ENCODE measurements at regions of chr4 and their contacts with region 1.

Region 1: GRCh38 chr4:167021545-167022155 is 212.6 kb downstream of the SPOCK3 start:
- DNase-seq: peak; percentile 61
- H3K4me3 ChIP-seq: no peak overlapping the region
- H3K27ac ChIP-seq: no peak overlapping the region
- H3K4me1 ChIP-seq: no peaks in the 10 kb centered on the region
- H3K27me3 ChIP-seq: no peaks in the 10 kb centered on the region
- CTCF ChIP-seq: peak; percentile 86

Region 2: GRCh38 chr4:166165829-166166420 is 855.7 kb before region 1 on chr4:
- CTCF ChIA-PET with region 1: no interaction called
- POLR2A ChIA-PET with region 1: no interaction called
- intact Hi-C with region 1: loop called (anchors 10 kb)
- DNase-seq: peak; percentile 87
- H3K4me3 ChIP-seq: no peak overlapping the region
- H3K27ac ChIP-seq: no peak overlapping the region
- H3K4me1 ChIP-seq: no peaks in the 10 kb centered on the region
- H3K27me3 ChIP-seq: no peaks in the 10 kb centered on the region
- CTCF ChIP-seq: peak; percentile 74

Region 3: GRCh38 chr4:167041524-167041923 is 19.9 kb after region 1 on chr4:
- CTCF ChIA-PET with region 1: no interaction called
- POLR2A ChIA-PET with region 1: no interaction called
- intact Hi-C with region 1: no loop called
- DNase-seq: no peak
- H3K4me3 ChIP-seq: no peak overlapping the region
- H3K27ac ChIP-seq: no peak overlapping the region
- H3K4me1 ChIP-seq: no peaks in the 10 kb centered on the region
- H3K27me3 ChIP-seq: no peaks in the 10 kb centered on the region
- CTCF ChIP-seq: no peak

Region 4: DNA sequence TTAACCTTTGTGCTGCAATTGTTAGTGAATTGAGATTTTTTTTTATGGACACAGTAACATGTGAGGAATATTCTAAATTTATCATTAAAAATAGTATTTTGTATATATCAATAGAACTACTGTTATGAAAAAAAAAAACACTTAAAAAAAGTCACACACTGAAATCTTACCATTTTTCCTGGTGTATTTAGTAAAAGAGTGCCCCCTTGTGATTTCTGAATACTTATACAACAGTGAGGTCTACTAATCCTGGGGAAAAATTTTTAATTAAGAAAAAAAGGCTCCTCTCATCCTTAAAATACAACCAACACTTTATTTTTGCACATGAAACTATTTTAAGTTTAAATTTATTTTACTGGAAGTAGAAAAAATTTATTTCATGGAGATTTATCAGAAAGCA is 269.0 kb after region 1 on chr4:
- CTCF ChIA-PET with region 1: no interaction called
- POLR2A ChIA-PET with region 1: no interaction called
- intact Hi-C with region 1: loop called (anchors 2 kb)
- DNase-seq: peak; percentile 15
- H3K4me3 ChIP-seq: no peak overlapping the region
- H3K27ac ChIP-seq: no peak overlapping the region
- H3K4me1 ChIP-seq: no peaks in the 10 kb centered on the region
- H3K27me3 ChIP-seq: no peaks in the 10 kb centered on the region
- CTCF ChIP-seq: peak; percentile 49; the same call in 1 of the 2 replicates

Region 5: GRCh38 chr4:167622481-167623246 is 601.0 kb after region 1 on chr4:
- CTCF ChIA-PET with region 1: no interaction called
- POLR2A ChIA-PET with region 1: no interaction called
- intact Hi-C with region 1: loop called (anchors 5 kb)
- DNase-seq: peak; percentile 68
- H3K4me3 ChIP-seq: no peak overlapping the region
- H3K27ac ChIP-seq: no peak overlapping the region
- H3K4me1 ChIP-seq: no peaks in the 10 kb centered on the region
- H3K27me3 ChIP-seq: no peaks in the 10 kb centered on the region
- CTCF ChIP-seq: peak; percentile 86

Region 6: DNA sequence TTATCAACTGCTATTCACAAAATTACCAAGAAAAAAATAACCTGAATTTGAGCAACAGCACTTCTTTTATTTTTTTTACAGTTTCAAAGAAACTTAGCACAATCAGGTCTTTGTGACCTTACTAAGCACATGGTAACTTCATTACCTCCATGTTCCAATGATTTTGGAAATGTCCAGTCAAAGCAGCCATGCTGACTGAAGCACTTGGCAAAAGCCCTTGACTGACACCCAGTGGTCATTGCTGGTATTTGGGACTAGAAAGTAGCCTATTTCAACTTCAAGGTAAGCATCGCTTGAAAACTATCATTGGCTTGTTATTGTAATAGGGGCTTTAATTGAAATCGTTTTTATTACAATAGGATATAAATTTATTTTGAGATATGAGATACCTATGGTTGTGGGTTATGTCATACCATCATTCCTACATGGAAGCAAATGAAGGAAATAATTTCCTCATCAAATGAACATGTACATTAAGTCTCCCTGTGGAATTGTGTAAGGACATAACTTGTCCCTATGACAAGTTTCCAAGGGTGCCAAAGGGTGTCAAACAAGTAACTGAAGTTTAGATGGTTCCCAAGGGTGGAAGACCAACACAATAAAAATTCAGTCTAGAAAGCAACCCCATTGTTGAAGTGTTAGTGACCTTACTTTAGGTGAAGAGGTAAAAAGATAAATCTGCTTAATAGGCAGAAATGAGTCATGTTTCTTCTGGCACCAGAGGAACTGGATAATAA is 1055.5 kb after region 1 on chr4:
- CTCF ChIA-PET with region 1: no interaction called
- POLR2A ChIA-PET with region 1: no interaction called
- intact Hi-C with region 1: loop called (anchors 2 kb)
- DNase-seq: peak; percentile 71
- H3K4me3 ChIP-seq: no peak overlapping the region
- H3K27ac ChIP-seq: no peak overlapping the region
- H3K4me1 ChIP-seq: no peaks in the 10 kb centered on the region
- H3K27me3 ChIP-seq: peaks cover 7% of the 10 kb centered on the region
- CTCF ChIP-seq: peak; percentile 93

Region 7: DNA sequence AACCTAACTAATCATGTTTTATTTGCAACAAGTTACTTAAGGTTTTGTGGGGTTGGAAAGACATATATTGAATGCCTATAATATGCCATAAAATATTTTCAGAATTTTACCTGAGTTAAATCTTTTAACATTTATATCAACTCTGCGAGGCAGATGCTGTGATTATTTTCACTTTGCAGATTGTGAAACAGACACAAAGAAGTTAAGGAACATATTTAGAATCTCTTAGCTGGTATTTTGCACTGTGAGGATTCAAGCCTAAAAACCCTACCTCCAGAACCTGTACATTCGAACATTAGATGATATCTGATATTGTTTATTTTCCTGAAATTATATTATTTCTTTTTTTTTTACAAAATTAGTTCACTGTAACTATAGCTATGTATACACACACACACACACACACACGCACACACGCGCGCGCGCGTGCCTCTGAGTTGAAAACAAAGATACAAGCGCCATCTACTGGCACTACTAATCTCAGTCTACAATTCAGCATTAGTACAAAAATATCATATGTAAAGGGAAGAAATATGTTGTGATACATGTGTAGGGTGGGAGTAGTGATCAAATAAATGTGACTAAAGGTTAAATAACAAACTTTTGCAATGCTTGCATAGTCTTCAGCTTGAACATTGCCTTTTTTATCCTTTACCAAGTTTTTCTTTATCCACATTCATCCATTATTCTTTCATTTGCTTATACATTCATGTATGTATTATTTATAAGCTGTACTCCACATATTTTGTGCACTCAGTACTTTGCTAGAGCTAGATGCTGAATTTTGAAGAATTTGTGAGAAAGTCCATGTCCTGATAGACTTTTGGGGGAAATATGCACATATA is 1132.2 kb after region 1 on chr4:
- CTCF ChIA-PET with region 1: no interaction called
- POLR2A ChIA-PET with region 1: no interaction called
- intact Hi-C with region 1: loop called (anchors 2 kb)
- DNase-seq: peak; percentile 81
- H3K4me3 ChIP-seq: peak overlapping the region; percentile 20
- H3K27ac ChIP-seq: no peak overlapping the region
- H3K4me1 ChIP-seq: no peaks in the 10 kb centered on the region
- H3K27me3 ChIP-seq: no peaks in the 10 kb centered on the region
- CTCF ChIP-seq: peak; percentile 91